Activated CD4-positive, alpha-beta T cell treated with anti-CD3 and anti-CD28 coated beads for 36 hours (primary cell): ENCODE measurements at regions of chr10 and their contacts with region 1.

Region 1: DNA sequence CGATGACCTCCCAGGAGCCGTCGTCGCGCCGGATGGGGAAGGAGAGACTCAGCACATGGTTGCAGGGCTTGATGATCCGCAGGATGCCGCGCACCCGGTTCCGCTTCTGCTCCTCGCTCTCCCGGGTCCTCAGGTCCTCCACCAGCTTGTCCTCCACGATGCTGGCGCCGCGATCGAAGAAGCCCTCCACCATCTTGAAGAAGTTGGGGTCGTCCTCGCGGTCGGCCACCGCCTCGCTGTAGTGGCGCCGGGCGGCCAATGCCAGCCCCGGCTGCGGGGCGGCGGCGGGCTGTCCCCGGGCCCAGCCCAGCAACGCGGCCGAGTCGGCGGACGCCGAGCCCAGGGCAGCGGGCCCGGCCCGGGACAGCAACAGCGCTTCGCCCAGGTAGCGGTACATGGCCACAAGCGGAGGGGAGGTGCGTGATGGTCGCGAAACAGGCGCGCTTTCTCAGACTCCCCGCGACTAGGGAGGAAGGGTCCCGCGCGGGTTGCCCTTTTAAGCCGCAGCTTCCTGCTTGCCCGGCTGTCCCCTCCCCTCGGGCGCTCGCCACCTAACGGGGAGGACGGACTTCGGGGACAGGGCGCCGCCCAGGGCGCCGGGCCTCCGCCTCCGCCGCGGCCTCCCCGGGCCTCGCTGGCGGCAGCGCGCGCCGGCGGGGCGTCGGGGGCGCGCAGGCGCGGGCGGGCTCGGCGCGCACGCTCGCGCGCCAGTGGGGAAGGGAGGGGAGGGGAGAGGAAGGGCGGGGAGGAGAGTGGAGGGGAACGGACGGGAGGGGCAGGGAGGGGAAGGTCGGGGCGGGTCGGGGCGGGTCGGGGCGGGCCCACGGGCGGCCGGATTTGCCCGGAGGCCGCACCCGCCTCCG is at the starts of genes GLUD1 and SHLD2:
- DNase-seq: peak; percentile 94
- ATAC-seq: peak; percentile 80
- H3K4me3 Mint-ChIP-seq: peak within 1 kb of the TSS; percentile 85
- H3K27ac Mint-ChIP-seq: peak within 1 kb of the TSS; percentile 91
- H3K4me1 Mint-ChIP-seq: peaks cover 34% of the 10 kb centered on the region
- H3K27me3 Mint-ChIP-seq: no peaks in the 10 kb centered on the region
- total RNA-seq, gene GLUD1: 98.4 to 125 TPM
- total RNA-seq, gene SHLD2: 29.7 to 29.9 TPM

Region 2: DNA sequence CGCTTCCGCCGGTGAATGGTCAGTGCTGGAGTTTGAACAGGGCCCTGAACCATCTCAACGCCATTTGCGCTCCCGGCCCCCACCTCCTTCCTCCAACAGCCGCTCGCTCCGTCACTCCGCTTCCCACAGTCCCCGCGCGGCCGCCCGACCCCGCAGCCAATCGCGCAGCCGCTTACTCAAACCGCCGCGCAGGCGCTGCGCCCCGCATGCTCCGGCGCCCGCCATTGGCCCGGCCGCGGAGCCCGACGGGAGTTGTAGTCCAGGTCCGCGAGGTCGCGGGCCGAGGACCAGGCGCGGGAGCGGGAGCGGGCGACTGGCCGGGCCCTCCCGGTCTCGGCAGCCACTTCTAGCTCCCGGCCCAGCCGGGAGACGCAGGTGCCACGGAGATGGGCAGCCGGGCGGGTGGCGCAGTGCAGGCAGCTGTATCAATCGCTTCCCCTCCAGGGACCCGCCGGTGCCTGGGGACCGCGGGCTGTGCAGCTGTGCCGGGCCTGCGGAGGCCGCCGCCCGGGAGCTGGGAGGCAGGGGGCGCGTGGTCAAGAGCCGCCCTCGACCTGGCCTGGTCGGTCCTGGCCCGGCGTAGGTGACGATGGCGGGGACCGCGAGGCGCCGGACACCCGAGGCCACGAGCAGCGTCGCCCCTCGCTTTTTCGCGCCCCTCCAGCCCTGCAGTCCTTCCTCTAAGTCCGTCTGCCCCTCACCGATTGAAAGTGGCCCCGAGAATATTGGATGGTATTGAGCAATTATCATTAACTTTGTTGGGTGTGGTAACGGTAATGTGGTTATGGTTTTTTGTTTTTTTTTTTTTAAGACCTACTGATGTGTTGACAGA is 572.7 kb before region 1 on chr10 and contains the start of gene WAPL:
- CTCF ChIA-PET with region 1: no interaction called
- POLR2A ChIA-PET with region 1: no interaction called
- intact Hi-C with region 1: loop called in 1 of 2 experiments (anchors 2 kb)
- DNase-seq: peak; percentile 97
- ATAC-seq: peak; percentile 97
- H3K4me3 Mint-ChIP-seq: peak within 1 kb of the TSS; percentile 82
- H3K27ac Mint-ChIP-seq: peak within 1 kb of the TSS; percentile 88
- H3K4me1 Mint-ChIP-seq: peaks cover 59% of the 10 kb centered on the region
- H3K27me3 Mint-ChIP-seq: no peaks in the 10 kb centered on the region
- total RNA-seq, gene WAPL: 37.4 to 43.2 TPM

Region 3: DNA sequence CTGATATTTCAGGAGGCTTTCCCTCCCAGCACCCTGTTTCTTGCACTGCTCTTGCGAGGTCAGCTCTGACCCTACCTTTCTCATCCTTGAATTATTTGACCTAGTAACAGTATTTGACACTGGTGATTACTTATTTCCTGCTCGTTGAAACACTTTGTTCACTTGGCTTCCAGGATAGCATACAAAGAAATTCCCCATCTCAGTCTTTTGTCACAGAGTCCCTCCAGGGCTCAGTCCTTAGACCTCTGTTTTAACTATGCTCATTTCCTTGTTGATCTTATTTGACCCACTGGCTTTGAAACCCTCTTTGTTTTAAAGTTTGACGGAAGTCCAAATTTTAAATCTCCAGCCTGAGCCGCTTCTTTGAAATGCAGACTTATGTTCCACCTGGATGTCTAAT is 308.2 kb before region 1 on chr10:
- CTCF ChIA-PET with region 1: no interaction called
- POLR2A ChIA-PET with region 1: no interaction called
- intact Hi-C with region 1: no loop called
- DNase-seq: no peak
- ATAC-seq: no peak
- H3K4me3 Mint-ChIP-seq: no peak overlapping the region
- H3K27ac Mint-ChIP-seq: no peak overlapping the region
- H3K4me1 Mint-ChIP-seq: peaks cover 6% of the 10 kb centered on the region
- H3K27me3 Mint-ChIP-seq: peaks cover 2% of the 10 kb centered on the region

Region 4: DNA sequence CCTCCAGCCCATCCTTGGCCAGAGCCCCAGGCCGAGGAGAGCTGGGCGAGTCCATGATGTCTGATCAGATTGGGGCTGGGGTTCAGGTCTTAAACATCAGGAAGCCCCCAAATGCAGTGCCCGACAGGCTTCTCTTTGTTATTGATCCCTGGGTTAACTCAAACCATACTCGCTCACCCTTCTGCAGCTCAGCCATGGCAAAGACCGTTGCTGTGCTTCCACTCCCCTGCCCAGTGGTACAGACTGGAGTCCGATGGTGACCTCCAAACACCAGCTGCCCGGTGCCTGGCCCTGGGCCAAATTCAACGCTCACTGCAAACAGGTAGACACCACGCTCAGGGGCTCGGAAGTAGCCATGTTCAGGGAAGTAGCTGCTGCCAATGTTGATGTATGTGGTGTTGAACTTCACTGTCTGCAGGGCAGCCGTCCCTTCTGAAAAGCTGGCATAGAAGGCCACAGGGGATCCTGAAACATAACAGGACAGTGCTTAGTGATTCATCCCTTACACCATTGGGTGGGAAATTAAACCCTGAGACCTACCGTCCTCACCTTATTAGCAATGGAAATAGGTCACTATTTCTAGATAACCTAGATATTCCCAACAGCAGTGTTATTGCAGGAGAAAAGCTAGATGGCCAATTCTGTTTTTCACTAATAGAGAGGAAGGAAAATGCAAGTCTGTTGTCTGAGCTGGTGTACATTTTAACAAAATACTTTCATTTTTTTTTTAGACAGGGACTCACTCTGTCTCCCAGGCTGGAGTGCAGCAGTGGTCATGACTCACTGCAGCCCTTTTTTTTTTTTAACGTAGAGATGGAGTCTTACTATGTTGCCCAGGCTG is 157.7 kb before region 1 on chr10:
- CTCF ChIA-PET with region 1: interaction called, 4 read pairs
- POLR2A ChIA-PET with region 1: interaction called, 3 read pairs
- intact Hi-C with region 1: loop called in 1 of 2 experiments (anchors 1 kb)
- DNase-seq: no peak
- ATAC-seq: no peak
- H3K4me3 Mint-ChIP-seq: no peak overlapping the region
- H3K27ac Mint-ChIP-seq: no peak overlapping the region
- H3K4me1 Mint-ChIP-seq: no peaks in the 10 kb centered on the region
- H3K27me3 Mint-ChIP-seq: no peaks in the 10 kb centered on the region

Region 5: GRCh38 chr10:86971232-86971991 is 123.2 kb before region 1 on chr10:
- CTCF ChIA-PET with region 1: no interaction called
- POLR2A ChIA-PET with region 1: no interaction called
- intact Hi-C with region 1: loop called (anchors 1 to 10 kb)
- DNase-seq: peak; percentile 88
- ATAC-seq: peak; percentile 78
- H3K4me3 Mint-ChIP-seq: peak overlapping the region; percentile 70
- H3K27ac Mint-ChIP-seq: peak overlapping the region; percentile 80
- H3K4me1 Mint-ChIP-seq: peaks cover 26% of the 10 kb centered on the region
- H3K27me3 Mint-ChIP-seq: peaks cover 10% of the 10 kb centered on the region

Region 6: DNA sequence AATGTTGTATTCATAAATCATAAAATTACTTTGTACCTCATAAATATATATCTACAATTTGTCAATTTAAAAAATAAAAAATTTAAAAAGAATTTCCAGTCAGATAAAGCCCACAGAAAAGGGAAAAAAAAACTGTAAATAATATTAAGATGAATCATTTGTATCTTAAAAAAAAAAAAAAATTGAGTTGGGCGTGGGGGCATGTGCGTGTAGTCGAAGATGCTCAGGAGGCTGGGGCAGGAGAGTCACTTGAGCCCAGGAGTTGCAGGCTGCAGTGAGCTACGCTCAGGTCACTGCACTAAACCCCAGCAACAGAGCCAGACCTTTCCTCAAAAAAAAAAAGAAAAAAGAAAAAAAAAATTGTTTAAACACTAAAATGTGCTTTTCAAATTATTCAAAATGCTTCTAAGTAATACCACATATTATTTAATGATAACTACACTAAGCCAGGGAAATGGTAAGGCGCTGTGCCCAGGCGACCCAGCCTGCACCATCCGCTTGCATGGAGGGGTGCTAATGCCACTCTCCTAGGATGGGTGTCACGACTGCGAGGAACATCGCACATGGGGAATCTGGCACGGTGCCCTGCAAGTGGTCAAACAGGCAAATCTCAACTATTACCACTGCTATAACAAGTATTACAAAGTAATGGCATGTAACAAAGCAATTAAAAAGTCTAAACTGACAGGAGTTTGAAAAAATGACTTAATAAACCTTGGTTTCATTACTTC is 15.3 kb before region 1 on chr10:
- CTCF ChIA-PET with region 1: interaction called, 8 read pairs
- POLR2A ChIA-PET with region 1: interaction called, 17 read pairs
- intact Hi-C with region 1: loop called in 1 of 2 experiments (anchors 1 kb)
- DNase-seq: no peak
- ATAC-seq: no peak
- H3K4me3 Mint-ChIP-seq: no peak overlapping the region
- H3K27ac Mint-ChIP-seq: no peak overlapping the region
- H3K4me1 Mint-ChIP-seq: peaks cover 43% of the 10 kb centered on the region
- H3K27me3 Mint-ChIP-seq: no peaks in the 10 kb centered on the region

Region 7: GRCh38 chr10:88608052-88608732 is 1513.6 kb after region 1 on chr10:
- CTCF ChIA-PET with region 1: no interaction called
- POLR2A ChIA-PET with region 1: no interaction called
- intact Hi-C with region 1: no loop called
- DNase-seq: no peak
- ATAC-seq: no peak
- H3K4me3 Mint-ChIP-seq: no peak overlapping the region
- H3K27ac Mint-ChIP-seq: no peak overlapping the region
- H3K4me1 Mint-ChIP-seq: no peaks in the 10 kb centered on the region
- H3K27me3 Mint-ChIP-seq: peaks cover 3% of the 10 kb centered on the region